Esophagus muscularis mucosa (tissue), 4 donors: ENCODE measurements at regions of chr2 and their contacts with region 1.

Region 1: GRCh38 chr2:147910990-147911473 is 66.2 kb downstream of the ACVR2A start:
- DNase-seq: no peak
- H3K4me3 ChIP-seq: no peak overlapping the region
- H3K27ac ChIP-seq: no peak overlapping the region
- H3K4me1 ChIP-seq: peaks cover 9 to 43% (median 42%) of the 10 kb centered on the region in 4 donors
- H3K27me3 ChIP-seq: no peaks in the 10 kb centered on the region
- CTCF ChIP-seq: peak; percentile 77 to 86 (median 78)
- EP300 ChIP-seq: no peak
- POLR2A ChIP-seq: no peak

Region 2: DNA sequence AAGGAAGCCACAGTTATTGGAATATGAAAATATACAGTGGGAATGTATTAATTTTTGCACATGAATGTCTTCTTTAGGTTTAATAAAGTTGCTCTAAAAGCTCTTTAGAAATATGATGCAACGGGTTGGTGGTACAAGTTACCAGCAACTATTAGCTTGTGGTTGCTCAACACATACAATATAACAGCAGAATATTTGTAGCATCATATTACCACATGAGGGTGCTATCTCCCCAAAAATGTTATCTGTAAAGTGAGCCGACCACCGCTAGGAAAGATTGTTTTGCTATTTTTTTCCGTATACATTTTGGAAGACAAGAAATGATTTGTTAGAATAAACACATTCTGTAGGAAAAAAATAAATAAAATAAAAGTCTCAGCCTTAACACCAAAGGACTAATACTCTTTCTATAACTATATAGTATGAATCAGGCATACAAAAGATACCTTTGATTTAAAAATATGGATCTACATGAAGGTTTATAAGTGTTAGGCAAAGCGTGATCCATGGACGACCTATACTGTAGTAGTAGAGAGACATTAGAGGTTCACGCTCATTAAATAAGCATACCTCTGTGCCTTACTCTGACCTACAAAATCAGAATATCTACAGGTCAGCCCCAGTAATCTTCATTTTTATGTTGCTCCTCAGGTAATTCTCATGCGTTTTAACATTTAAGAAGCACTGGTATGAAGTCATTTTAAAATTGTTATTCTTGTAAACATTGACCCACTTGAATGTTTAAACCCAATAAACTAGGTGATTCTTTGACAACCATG is 1176.8 kb before region 1 on chr2:
- intact Hi-C with region 1: loop called (anchors 5 kb)
- DNase-seq: no peak
- H3K4me3 ChIP-seq: no peak overlapping the region
- H3K27ac ChIP-seq: no peak overlapping the region
- H3K4me1 ChIP-seq: peaks cover 0 to 6% (median 2%) of the 10 kb centered on the region in 4 donors
- H3K27me3 ChIP-seq: no peaks in the 10 kb centered on the region
- CTCF ChIP-seq: peak; percentile 62 to 66 (median 66)
- EP300 ChIP-seq: no peak
- POLR2A ChIP-seq: no peak

Region 3: DNA sequence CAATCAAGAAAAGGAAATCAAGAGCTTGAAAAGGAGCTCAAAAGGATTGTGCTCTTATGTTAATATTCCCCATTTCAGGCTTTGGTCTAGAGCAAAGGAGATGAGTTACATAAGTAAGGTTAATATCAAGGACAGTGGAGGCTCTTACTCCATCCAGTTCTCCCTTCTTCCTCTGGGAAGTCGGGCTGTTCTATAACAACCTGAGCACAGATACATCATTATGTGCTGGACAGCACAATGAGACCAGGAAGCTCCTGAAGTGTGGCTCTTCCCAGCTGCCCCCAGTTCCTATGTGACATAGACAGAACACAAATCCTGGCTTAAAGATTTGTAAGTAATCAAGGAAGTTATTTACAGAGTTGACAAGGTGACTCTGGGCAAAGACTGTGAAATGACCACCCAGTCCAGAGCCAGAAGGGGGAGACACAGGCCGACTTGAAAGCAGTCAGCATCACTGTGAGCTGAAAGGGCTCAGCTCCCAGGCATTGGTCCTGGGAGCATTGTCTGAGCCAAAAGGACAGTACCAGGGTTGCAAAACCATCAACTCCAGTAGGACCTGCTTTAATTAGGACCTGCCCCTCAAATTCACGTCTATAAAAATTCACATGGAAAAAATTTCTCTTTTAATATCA is 983.8 kb before region 1 on chr2:
- intact Hi-C with region 1: loop called (anchors 2 kb)
- DNase-seq: no peak
- H3K4me3 ChIP-seq: no peak overlapping the region
- H3K27ac ChIP-seq: peak overlapping the region in 3 of 4 donors; percentile 6 to 30 (median 24)
- H3K4me1 ChIP-seq: peaks cover 0 to 18% (median 15%) of the 10 kb centered on the region in 4 donors
- H3K27me3 ChIP-seq: no peaks in the 10 kb centered on the region
- CTCF ChIP-seq: peak; percentile 72 to 82 (median 76)
- EP300 ChIP-seq: no peak
- POLR2A ChIP-seq: no peak

Region 4: GRCh38 chr2:147844697-147845410 is 66.2 kb before region 1 on chr2 and contains the start of gene ACVR2A:
- intact Hi-C with region 1: loop called (anchors 5 kb)
- DNase-seq: no peak
- H3K4me3 ChIP-seq: peak within 1 kb of the TSS; percentile 81 to 90 (median 82)
- H3K27ac ChIP-seq: peak within 1 kb of the TSS; percentile 97 to 99 (median 98)
- H3K4me1 ChIP-seq: peaks cover 14 to 43% (median 39%) of the 10 kb centered on the region in 4 donors
- H3K27me3 ChIP-seq: no peaks in the 10 kb centered on the region
- CTCF ChIP-seq: no peak
- EP300 ChIP-seq: no peak
- POLR2A ChIP-seq: no peak
- total RNA-seq, gene ACVR2A: 17.4 to 42.4 (median 28.0) TPM

Region 5: GRCh38 chr2:147873859-147874483 is 37.1 kb before region 1 on chr2:
- intact Hi-C with region 1: no loop called
- DNase-seq: no peak
- H3K4me3 ChIP-seq: no peak overlapping the region
- H3K27ac ChIP-seq: no peak overlapping the region
- H3K4me1 ChIP-seq: peaks cover 5 to 76% (median 62%) of the 10 kb centered on the region in 4 donors
- H3K27me3 ChIP-seq: no peaks in the 10 kb centered on the region
- CTCF ChIP-seq: no peak
- EP300 ChIP-seq: no peak
- POLR2A ChIP-seq: no peak

Region 6: DNA sequence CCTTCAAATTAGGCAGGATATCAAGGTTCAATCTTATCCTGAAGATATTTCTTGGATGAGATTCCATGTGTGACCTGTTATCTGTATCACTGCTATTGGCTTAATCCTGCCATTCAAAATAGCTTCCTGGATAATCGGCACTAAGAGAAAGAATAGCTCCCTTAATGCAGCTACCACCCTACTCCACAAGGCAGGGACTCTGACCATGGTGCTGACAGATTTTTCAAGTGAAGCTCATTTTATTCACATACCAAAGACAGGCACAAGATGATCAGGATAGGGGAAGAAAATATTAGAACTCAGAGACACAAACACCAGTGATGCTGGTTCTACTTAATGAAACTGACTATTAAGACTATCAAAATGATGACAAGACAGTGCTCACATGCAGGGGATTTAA is 34.6 kb after region 1 on chr2:
- intact Hi-C with region 1: no loop called
- DNase-seq: no peak
- H3K4me3 ChIP-seq: no peak overlapping the region
- H3K27ac ChIP-seq: no peak overlapping the region
- H3K4me1 ChIP-seq: no peaks in the 10 kb centered on the region
- H3K27me3 ChIP-seq: no peaks in the 10 kb centered on the region
- CTCF ChIP-seq: no peak
- EP300 ChIP-seq: no peak
- POLR2A ChIP-seq: no peak

Region 7: DNA sequence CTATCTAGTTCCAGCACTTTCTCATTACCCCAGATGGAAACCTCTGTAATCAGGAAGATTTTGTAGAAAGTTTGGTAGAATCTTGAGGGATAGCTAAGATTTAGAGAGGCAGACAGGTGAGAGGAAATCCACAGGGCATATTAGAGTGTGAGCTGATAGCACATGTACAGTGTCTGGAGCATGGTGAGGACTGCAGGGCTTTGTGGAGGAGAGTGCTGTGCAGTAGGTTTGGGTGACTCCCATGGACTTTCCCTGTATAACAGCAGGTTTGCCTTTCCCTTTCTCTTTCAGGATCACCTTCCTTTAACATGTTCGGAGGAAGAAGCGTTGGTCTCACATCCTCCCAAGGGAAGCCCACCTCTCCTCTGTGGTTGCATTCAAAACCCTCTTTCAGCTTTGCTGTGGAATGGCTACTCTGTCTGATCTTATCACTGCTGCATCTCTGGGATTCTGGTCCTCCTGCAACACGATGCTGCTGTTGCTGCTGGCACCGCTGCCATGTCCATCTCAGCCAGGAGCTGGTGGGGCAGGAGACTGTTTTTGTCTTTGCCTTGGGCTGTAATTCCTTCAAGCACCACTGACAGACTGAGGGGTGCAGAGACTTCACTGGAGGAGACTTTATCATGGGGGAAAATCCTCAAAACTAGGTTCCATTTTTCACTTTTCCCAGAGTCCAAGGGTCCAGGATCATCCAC is 956.2 kb after region 1 on chr2:
- intact Hi-C with region 1: no loop called
- DNase-seq: no peak
- H3K4me3 ChIP-seq: no peak overlapping the region
- H3K27ac ChIP-seq: no peak overlapping the region
- H3K4me1 ChIP-seq: no peaks in the 10 kb centered on the region
- H3K27me3 ChIP-seq: peaks cover 0 to 8% (median 0%) of the 10 kb centered on the region in 4 donors
- CTCF ChIP-seq: no peak
- EP300 ChIP-seq: no peak
- POLR2A ChIP-seq: no peak